MCF 10A (cell line): ENCODE measurements at regions of chr5 and their contacts with region 1.

Region 1: GRCh38 chr5:142922223-142922952 is 152.2 kb downstream of the ARHGAP26 start:
- DNase-seq: peak; percentile 56
- H3K4me3 Mint-ChIP-seq: no peak overlapping the region
- H3K27ac Mint-ChIP-seq: no peak overlapping the region
- H3K4me1 Mint-ChIP-seq: peaks cover 25% of the 10 kb centered on the region
- H3K27me3 Mint-ChIP-seq: no peaks in the 10 kb centered on the region
- CTCF ChIP-seq: peak; percentile 68

Region 2: DNA sequence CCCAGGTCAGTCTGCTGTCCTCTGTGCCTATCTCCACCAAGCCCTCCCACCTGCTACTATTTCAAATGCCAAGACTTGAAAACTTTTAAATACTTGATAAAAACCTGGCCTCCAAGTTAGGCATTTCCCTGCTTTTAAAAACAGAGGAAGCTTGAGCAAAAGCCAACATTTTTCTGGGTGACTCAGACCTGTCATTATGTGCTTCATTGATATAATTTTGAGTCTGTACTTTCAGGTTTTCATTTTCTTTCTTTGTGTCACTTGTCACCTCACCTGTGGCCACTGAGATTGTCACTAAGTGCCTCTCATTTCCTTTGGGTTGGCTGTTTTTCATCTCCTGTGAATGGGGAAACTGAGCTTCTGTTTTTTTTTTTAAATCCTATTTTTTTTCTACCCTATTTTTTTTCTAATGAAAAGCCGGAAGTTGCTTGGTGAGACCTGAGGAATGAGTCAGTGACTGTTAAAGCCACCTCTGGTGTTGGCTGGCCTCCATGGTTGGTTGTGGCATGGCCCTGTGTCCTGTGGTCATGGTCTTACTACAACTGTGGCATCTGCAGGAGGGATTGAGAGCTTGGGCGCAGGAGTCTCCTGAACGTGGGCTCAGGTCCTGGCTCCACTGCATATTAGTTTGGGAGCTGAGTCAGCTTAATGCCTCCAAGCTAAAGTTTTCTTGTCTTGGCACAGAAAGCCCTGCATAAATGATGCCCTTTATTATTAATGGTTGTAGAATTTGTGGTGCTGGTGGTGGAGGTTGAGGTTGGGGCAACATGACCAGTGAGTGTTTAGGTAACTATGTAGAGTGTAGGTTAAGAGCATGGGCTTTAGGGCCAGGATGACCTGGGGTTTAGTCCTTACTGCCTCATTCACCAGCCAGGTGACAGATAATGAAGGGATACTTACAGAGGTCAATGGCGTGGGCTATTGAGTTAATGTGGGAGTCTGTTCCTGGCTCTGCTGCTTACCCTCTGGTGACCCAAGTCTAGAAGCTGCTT is 95.4 kb before region 1 on chr5:
- CTCF ChIA-PET with region 1: no interaction called
- POLR2A ChIA-PET with region 1: no interaction called
- intact Hi-C with region 1: no loop called
- DNase-seq: peak; percentile 83
- H3K4me3 Mint-ChIP-seq: peak overlapping the region; percentile 35
- H3K27ac Mint-ChIP-seq: peak overlapping the region; percentile 73
- H3K4me1 Mint-ChIP-seq: peaks cover 57% of the 10 kb centered on the region
- H3K27me3 Mint-ChIP-seq: no peaks in the 10 kb centered on the region
- CTCF ChIP-seq: no peak

Region 3: GRCh38 chr5:143106174-143106573 is 183.8 kb after region 1 on chr5:
- CTCF ChIA-PET with region 1: interaction called, 6 read pairs
- POLR2A ChIA-PET with region 1: no interaction called
- intact Hi-C with region 1: loop called (anchors 10 kb)
- DNase-seq: peak; percentile 79
- H3K4me3 Mint-ChIP-seq: no peak overlapping the region
- H3K27ac Mint-ChIP-seq: no peak overlapping the region
- H3K4me1 Mint-ChIP-seq: peaks cover 5% of the 10 kb centered on the region
- H3K27me3 Mint-ChIP-seq: no peaks in the 10 kb centered on the region
- CTCF ChIP-seq: peak; percentile 33

Region 4: DNA sequence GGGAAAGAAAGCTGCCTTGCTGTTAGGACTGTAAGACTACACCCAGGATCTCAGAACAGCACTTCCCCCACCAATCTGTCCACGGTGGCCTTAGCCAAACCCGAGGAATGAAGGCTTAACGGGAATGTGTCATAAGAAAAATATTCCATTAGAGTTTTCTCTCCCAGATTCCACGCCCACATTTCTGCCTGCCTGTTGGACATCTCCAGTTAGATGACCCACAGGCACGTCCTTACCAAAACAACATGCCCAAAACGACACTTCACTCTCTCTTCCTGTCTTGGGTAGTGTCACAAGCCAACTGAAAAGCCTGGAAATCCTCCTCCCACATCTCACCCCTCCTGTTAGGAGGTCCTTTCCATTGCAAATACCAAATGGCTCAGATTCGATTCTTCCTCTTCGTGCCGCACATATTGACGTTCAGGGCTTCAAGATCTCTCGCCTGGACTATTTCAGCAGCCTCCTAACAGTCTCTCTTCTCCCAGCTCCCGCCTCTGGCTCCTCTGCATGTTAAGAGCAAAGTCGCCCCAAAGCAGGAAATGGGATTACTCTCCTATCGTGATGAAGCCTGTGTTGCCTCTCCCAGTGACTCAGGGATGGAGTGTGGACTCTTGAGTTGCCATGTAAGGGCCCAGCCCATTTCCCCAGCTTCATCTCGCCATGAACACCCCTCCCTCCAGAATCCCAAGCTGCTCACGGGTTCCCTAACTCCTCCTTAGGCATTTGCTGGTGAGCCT is 321.8 kb after region 1 on chr5:
- CTCF ChIA-PET with region 1: interaction called, 5 read pairs
- POLR2A ChIA-PET with region 1: no interaction called
- intact Hi-C with region 1: loop called (anchors 10 kb)
- DNase-seq: peak; percentile 98
- H3K4me3 Mint-ChIP-seq: peak overlapping the region; percentile 54
- H3K27ac Mint-ChIP-seq: peak overlapping the region; percentile 84
- H3K4me1 Mint-ChIP-seq: peaks cover 61% of the 10 kb centered on the region
- H3K27me3 Mint-ChIP-seq: no peaks in the 10 kb centered on the region
- CTCF ChIP-seq: no peak

Region 5: GRCh38 chr5:143506881-143507551 is 584.6 kb after region 1 on chr5:
- CTCF ChIA-PET with region 1: interaction called, 4 read pairs
- POLR2A ChIA-PET with region 1: interaction called, 3 read pairs
- intact Hi-C with region 1: loop called (anchors 10 kb)
- DNase-seq: peak; percentile 98
- H3K4me3 Mint-ChIP-seq: peak overlapping the region; percentile 44
- H3K27ac Mint-ChIP-seq: peak overlapping the region; percentile 84
- H3K4me1 Mint-ChIP-seq: peaks cover 41% of the 10 kb centered on the region
- H3K27me3 Mint-ChIP-seq: no peaks in the 10 kb centered on the region
- CTCF ChIP-seq: peak; percentile 16

Region 6: GRCh38 chr5:143968011-143968878 is 1045.9 kb after region 1 on chr5:
- CTCF ChIA-PET with region 1: interaction called, 3 read pairs
- POLR2A ChIA-PET with region 1: no interaction called
- intact Hi-C with region 1: loop called (anchors 5 kb)
- DNase-seq: peak; percentile 80
- H3K4me3 Mint-ChIP-seq: no peak overlapping the region
- H3K27ac Mint-ChIP-seq: no peak overlapping the region
- H3K4me1 Mint-ChIP-seq: peaks cover 24% of the 10 kb centered on the region
- H3K27me3 Mint-ChIP-seq: no peaks in the 10 kb centered on the region
- CTCF ChIP-seq: peak; percentile 76